ENCODE measurements at regions of chr6 and their contacts with region 1.

Region 1: GRCh38 chr6:169868458-169868857 is 117.0 kb downstream of the ERMARD start:
- DNase-seq: no peak
- H3K4me3 ChIP-seq: no peak overlapping the region
- H3K27ac ChIP-seq: no peak overlapping the region
- H3K4me1 ChIP-seq: no peaks in the 10 kb centered on the region
- H3K27me3 ChIP-seq: no peaks in the 10 kb centered on the region
- CTCF ChIP-seq: no peak

Region 2: DNA sequence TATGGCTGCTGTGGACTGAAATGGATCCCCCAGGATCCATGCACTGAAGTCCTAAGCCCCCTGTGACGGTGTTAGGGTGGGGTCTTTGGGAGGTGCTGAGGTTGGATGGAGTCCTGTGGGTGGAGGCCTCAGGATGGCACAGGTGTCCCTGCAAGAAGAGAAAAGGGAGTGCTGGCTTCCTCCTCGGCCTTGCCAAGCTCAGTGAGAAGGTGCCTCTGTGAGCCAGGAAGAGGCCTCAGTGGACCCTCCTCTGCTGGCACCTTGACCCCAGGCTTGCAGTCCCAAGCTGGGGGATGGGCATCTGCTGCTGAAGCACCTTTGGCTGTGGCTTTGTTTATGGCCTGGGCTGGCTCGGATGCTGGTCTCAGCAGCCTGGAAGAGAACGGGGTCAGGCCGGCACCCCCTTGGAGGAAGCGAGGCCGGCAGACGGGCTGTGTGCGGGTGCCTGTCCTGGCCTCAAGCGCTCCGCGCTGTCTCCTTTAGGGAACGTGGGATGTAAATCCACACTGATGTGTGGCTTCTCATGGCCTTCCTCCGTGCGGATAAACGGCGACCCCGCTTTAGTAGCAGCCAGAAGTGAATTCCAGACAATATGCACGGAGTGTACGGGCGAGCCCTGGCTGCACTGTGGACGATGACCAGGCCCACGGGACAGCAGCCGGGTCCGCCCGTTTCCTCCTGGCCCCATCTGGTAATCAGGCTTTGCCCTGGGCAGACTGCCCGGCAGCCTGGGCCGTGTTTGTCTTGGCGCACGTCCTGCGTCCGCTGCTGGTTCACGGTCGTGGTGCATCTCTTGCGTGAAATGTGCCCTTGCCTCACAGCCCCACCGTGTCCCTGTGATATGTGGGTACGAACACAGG is 65.6 kb after region 1 on chr6:
- CTCF ChIA-PET with region 1: no interaction called
- dilution Hi-C with region 1: loop called (anchors 10 kb)
- in situ Hi-C with region 1: no loop called
- intact Hi-C with region 1: no loop called
- DNase-seq: no peak
- H3K4me3 ChIP-seq: no peak overlapping the region
- H3K27ac ChIP-seq: no peak overlapping the region
- H3K4me1 ChIP-seq: no peaks in the 10 kb centered on the region
- H3K27me3 ChIP-seq: no peaks in the 10 kb centered on the region
- CTCF ChIP-seq: no peak